ENCODE measurements at regions of chr12 and their contacts with region 1.

Region 1: DNA sequence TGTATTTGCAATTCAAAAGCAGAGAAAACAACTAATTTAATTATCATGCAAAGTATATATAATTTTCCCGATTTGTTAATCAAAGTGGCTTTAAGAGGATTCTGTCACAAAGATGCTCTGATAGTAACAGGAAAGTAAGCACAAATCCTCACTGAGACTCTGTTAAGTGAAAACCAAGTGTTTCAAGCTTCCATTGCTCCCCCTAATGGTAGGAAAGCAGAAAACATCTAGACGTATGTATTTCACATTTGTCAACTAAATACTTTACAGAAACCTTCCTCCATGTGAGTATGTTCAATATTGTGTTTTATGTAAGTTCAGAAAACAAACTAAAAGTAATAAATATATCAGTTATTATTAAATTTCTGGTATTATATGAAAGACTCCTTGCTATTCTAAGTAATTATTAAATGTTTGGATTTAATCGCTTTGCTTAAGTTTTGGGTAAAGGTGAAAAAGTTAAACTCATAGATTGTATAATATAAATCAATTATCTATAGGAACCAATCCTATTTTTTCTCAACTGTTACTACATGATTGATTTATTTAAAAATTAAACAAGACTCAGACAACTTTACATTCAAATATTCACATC is 1.5 kb upstream of the NTS start:
- DNase-seq: peak; percentile 68
- H3K4me3 Mint-ChIP-seq: no peak overlapping the region
- H3K27ac Mint-ChIP-seq: no peak overlapping the region
- H3K4me1 Mint-ChIP-seq: no peaks in the 10 kb centered on the region
- H3K27me3 Mint-ChIP-seq: no peaks in the 10 kb centered on the region
- CTCF ChIP-seq: peak; percentile 50

Region 2: DNA sequence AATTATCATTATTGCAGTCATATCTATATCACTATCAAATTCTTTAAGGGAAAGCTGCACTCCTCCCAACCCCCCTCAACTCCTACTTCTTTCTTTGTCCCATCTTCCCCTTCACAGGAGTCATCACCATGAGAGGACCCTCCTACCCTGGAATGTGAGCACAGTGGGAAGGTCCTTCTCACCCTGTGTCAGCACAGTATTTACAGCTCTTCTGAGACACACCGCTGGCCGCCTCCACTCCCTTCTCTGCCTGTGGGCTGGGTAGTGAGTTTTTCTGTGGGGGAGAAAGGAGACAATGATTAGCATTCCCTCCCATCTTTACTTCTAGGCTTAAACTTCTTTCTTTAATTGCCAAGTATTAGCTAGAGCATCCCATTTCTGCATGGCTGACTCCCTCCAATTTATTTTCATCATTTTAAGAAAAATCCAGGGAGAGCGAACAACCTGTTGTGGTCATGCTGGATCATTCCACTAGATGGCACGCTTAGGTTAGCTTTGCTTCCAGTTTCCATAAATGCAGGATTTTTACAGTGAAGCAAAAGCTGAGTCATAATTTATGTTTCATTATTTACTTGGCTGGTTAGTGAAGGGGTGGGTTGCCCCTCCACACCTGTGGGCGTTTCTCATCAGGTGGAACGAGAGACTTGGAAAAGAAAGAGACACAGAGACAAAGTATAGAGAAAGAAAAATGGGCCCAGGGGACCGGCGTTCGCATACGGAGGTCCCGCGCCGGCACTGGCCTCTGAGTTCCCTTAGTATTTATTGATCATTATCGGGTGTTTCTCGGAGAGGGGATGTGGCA is 404.0 kb before region 1 on chr12:
- CTCF ChIA-PET with region 1: interaction called, 40 read pairs
- POLR2A ChIA-PET with region 1: interaction called, 4 read pairs
- intact Hi-C with region 1: loop called (anchors 1 kb)
- DNase-seq: peak; percentile 78
- H3K4me3 Mint-ChIP-seq: peak overlapping the region; percentile 69
- H3K27ac Mint-ChIP-seq: peak overlapping the region; percentile 59
- H3K4me1 Mint-ChIP-seq: peaks cover 21% of the 10 kb centered on the region
- H3K27me3 Mint-ChIP-seq: no peaks in the 10 kb centered on the region
- CTCF ChIP-seq: peak; percentile 85

Region 3: GRCh38 chr12:85476756-85477155 is 395.8 kb before region 1 on chr12:
- CTCF ChIA-PET with region 1: interaction called, 51 read pairs
- POLR2A ChIA-PET with region 1: interaction called, 4 read pairs
- intact Hi-C with region 1: loop called (anchors 1 kb)
- DNase-seq: no peak
- H3K4me3 Mint-ChIP-seq: no peak overlapping the region
- H3K27ac Mint-ChIP-seq: no peak overlapping the region
- H3K4me1 Mint-ChIP-seq: no peaks in the 10 kb centered on the region
- H3K27me3 Mint-ChIP-seq: no peaks in the 10 kb centered on the region
- CTCF ChIP-seq: no peak

Region 4: GRCh38 chr12:85575120-85576096 is 297.2 kb before region 1 on chr12:
- CTCF ChIA-PET with region 1: interaction called, 204 read pairs
- POLR2A ChIA-PET with region 1: interaction called, 10 read pairs
- intact Hi-C with region 1: loop called (anchors 1 kb)
- DNase-seq: peak; percentile 79
- H3K4me3 Mint-ChIP-seq: no peak overlapping the region
- H3K27ac Mint-ChIP-seq: no peak overlapping the region
- H3K4me1 Mint-ChIP-seq: no peaks in the 10 kb centered on the region
- H3K27me3 Mint-ChIP-seq: no peaks in the 10 kb centered on the region
- CTCF ChIP-seq: peak; percentile 66

Region 5: GRCh38 chr12:85688837-85689236 is 183.8 kb before region 1 on chr12:
- CTCF ChIA-PET with region 1: no interaction called
- POLR2A ChIA-PET with region 1: no interaction called
- intact Hi-C with region 1: no loop called
- DNase-seq: no peak
- H3K4me3 Mint-ChIP-seq: no peak overlapping the region
- H3K27ac Mint-ChIP-seq: no peak overlapping the region
- H3K4me1 Mint-ChIP-seq: no peaks in the 10 kb centered on the region
- H3K27me3 Mint-ChIP-seq: no peaks in the 10 kb centered on the region
- CTCF ChIP-seq: no peak

Measured in MCF 10A (cell line).